HepG2 (cell line): ENCODE measurements at regions of chr12 and their contacts with region 1.

Region 1: DNA sequence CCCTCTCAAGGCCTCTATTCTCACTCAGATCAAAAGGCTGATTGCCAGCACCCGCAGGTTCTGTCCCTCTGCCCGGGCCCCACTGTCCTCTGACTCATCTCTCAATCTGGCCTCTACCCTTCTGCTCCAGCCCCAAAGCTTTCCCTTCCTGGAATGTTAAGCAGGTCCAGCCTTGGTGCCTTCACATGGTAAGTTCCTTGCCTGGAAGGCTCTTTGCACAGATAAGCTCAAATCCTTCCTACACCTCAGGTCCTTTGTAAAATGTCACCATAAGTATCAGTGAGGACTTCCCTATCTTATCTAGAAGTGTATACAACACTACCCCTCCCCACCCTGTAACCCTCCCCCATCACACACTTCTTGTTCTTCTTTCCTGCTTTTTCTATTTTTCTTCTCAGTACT is 22.2 kb downstream of the LPCAT3 start:
- DNase-seq: peak; percentile 63
- ATAC-seq: peak; percentile 82
- H3K4me3 ChIP-seq: no peak overlapping the region
- H3K27ac ChIP-seq: no peak overlapping the region
- H3K4me1 ChIP-seq: peaks cover 32% of the 10 kb centered on the region
- H3K27me3 ChIP-seq: no peaks in the 10 kb centered on the region
- CTCF ChIP-seq: no peak
- EP300 ChIP-seq: peak in 1 of 2 experiments; percentile 22; a peak in 1 of 4 replicates
- POLR2A ChIP-seq: no peak
- RAD21 ChIP-seq: no peak

Region 2: GRCh38 chr12:6978609-6979011 is 17.4 kb before region 1 on chr12:
- CTCF ChIA-PET with region 1: no interaction called
- POLR2A ChIA-PET with region 1: interaction called, 19 read pairs
- in situ Hi-C with region 1: no loop called
- intact Hi-C with region 1: no loop called
- DNase-seq: no peak
- ATAC-seq: no peak
- H3K4me3 ChIP-seq: no peak overlapping the region
- H3K27ac ChIP-seq: peak overlapping the region; percentile 98
- H3K4me1 ChIP-seq: peaks cover 55% of the 10 kb centered on the region
- H3K27me3 ChIP-seq: no peaks in the 10 kb centered on the region
- CTCF ChIP-seq: no peak
- EP300 ChIP-seq: no peak
- POLR2A ChIP-seq: no peak
- RAD21 ChIP-seq: no peak

Region 3: GRCh38 chr12:7031306-7031705 is 35.3 kb after region 1 on chr12:
- CTCF ChIA-PET with region 1: no interaction called
- POLR2A ChIA-PET with region 1: interaction called, 3 read pairs
- in situ Hi-C with region 1: no loop called
- intact Hi-C with region 1: loop called (anchors 1 kb)
- DNase-seq: no peak
- ATAC-seq: no peak
- H3K4me3 ChIP-seq: no peak overlapping the region
- H3K27ac ChIP-seq: no peak overlapping the region
- H3K4me1 ChIP-seq: peaks cover 3% of the 10 kb centered on the region; the same call in 1 of the 2 replicates
- H3K27me3 ChIP-seq: no peaks in the 10 kb centered on the region
- CTCF ChIP-seq: no peak
- EP300 ChIP-seq: no peak
- POLR2A ChIP-seq: no peak
- RAD21 ChIP-seq: no peak